ENCODE measurements at regions of chr19 and their contacts with region 1.

Region 1: GRCh38 chr19:12766051-12766521 is 9.3 kb downstream of the HOOK2 start:
- DNase-seq: no peak
- H3K4me3 ChIP-seq: peak overlapping the region; percentile 35
- CTCF ChIP-seq: peak; percentile 65

Region 2: DNA sequence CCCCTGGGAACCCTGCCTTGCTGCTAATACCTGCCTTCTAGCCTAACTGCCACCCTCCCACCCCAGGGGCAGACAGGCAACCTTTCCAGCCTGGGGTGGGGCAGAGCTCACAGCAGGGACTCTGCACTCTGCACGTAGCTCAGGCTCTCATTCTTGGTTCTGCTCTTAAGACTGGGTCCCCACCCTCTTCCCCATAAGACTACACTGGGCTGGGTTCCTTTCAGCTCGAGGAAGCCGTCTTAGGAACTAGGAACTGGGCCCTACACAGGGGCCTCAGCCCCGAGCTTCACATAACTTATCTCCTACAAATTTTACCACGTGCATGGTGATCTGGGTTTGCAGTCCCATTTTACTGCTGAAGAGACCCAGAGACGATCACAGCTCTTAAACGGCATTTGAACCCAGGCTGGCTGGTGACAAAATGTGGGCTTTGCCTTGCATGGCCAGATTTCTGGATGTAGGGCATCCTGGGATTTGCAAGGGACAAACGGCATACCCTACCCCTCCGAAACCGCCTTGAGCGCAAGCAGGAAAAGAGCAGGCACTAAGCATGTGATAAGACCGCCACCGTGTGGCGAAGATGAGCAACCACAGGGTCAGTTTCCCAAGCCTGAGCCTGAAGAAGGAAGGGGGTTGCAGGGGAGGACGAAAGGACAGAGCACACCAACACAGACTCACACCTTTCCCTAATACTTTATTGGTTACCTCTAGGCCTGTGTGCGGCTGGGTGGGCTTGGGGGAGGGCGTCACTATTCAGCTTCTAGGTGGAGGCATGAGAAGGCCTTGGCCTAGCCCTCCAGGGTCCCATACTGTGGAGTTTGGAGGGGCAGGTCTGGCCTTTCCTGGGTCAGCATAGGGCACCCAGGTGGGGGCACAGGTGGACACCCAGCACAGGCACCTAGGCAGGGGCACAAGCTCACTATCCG is 30.3 kb after region 1 on chr19:
- in situ Hi-C with region 1: no loop called
- DNase-seq: peak; percentile 60
- H3K4me3 ChIP-seq: no peak overlapping the region
- CTCF ChIP-seq: peak; percentile 90

Region 3: GRCh38 chr19:12815088-12815487 is 49.0 kb after region 1 on chr19:
- in situ Hi-C with region 1: loop called (anchors 5 kb)
- DNase-seq: no peak
- H3K4me3 ChIP-seq: no peak overlapping the region
- CTCF ChIP-seq: no peak

Region 4: GRCh38 chr19:12847159-12848139 is 81.4 kb after region 1 on chr19:
- in situ Hi-C with region 1: loop called (anchors 5 kb)
- DNase-seq: peak; percentile 36
- H3K4me3 ChIP-seq: no peak overlapping the region
- CTCF ChIP-seq: peak; percentile 97

Measured in astrocyte of the cerebellum (primary cell).